A673 (cell line): ENCODE measurements at regions of chr12 and their contacts with region 1.

Region 1: GRCh38 chr12:94677775-94678174 is 27.4 kb upstream of the TMCC3 start:
- DNase-seq: no peak
- H3K4me3 ChIP-seq: no peak overlapping the region
- H3K27ac ChIP-seq: no peak overlapping the region
- H3K4me1 ChIP-seq: no peaks in the 10 kb centered on the region
- H3K27me3 ChIP-seq: peaks cover 5% of the 10 kb centered on the region
- CTCF ChIP-seq: no peak

Region 2: GRCh38 chr12:95634622-95635621 is 957.1 kb after region 1 on chr12:
- CTCF ChIA-PET with region 1: no interaction called
- POLR2A ChIA-PET with region 1: interaction called, 17 read pairs
- intact Hi-C with region 1: no loop called
- DNase-seq: no peak
- H3K4me3 ChIP-seq: no peak overlapping the region
- H3K27ac ChIP-seq: no peak overlapping the region
- H3K4me1 ChIP-seq: peaks cover 17% of the 10 kb centered on the region
- H3K27me3 ChIP-seq: no peaks in the 10 kb centered on the region
- CTCF ChIP-seq: no peak